ENCODE measurements at regions of chrX and their contacts with region 1.

Region 1: DNA sequence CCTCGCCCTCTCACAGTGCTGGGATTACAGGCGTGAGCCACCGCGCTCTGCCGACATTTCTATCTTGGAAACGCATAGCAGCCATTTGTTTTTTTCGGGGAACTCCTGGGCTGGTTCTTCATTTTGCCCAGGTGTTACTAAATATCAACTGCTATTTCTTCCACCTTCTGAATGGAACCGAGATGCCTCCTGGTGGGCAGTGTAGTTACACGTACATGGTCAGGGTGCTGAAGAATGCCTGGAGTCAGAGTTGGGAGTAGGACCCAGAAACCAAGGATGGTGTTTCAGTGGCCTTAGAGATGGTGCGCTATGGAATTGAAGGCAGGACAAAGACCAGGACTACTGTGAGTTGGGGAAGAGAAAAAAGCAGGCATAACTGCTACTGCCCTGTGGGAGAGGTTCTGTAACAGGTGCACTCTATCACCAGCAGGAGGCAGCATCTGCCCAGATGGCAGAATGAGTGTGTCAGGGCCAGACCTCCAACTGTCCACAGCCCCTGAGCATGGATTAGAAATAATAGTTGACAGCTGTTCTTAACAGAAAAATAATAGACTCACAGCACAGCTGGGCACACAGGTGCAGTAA is 81.7 kb downstream of the ZC4H2 start:
- DNase-seq: peak; percentile 36
- ATAC-seq: peak; percentile 99
- H3K4me3 ChIP-seq: no peak overlapping the region
- H3K27ac ChIP-seq: no peak overlapping the region
- H3K4me1 ChIP-seq: no peaks in the 10 kb centered on the region
- H3K27me3 ChIP-seq: no peaks in the 10 kb centered on the region
- CTCF ChIP-seq: peak; percentile 84
- EP300 ChIP-seq: no peak
- POLR2A ChIP-seq: no peak
- RAD21 ChIP-seq: peak; percentile 71

Region 2: DNA sequence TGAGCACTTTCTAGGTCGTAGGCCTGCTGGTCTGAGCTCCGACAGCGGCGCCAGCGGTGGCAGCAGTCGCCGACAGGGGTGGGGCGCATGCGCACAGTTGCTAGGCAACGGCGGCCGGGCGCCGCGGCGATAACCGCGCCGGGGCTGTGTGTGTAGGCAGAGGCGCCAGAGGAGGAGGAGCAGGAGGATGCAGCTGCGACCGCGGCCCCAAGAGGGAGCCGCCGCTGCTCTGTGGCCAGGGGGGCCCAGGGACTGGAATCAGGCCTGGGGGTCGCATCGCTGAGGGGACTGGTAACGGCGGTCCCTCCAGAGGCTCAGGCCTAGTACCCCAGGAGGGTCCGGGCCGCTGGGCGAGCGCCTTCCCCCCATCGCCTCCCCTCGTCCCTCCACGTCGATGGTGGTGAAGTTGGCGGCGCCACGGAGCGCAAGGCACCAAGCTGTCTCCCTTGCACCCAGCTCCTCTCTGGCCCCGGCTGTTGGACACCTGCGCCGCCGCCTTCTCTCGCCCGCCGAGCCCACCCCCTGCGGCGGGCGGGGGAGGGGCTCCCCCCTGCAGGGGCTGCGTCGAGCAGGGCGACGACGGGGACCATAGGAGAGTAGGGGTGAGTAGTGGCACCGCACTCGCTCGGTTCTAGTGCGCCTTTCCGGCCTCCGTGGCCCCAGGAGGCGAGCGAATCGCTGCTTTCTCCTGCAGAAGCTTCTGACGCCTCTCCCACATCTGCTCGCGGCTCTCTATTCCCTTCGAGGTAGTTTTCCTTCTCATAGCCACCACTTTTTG is 140.3 kb after region 1 on chrX:
- CTCF ChIA-PET with region 1: no interaction called
- POLR2A ChIA-PET with region 1: no interaction called
- in situ Hi-C with region 1: no loop called
- intact Hi-C with region 1: loop called (anchors 10 kb)
- DNase-seq: peak; percentile 56
- ATAC-seq: peak; percentile 97
- H3K4me3 ChIP-seq: peak within 1 kb of the TSS; percentile 62 to 78 (median 76)
- H3K27ac ChIP-seq: peak within 1 kb of the TSS; percentile 77
- H3K4me1 ChIP-seq: peaks cover 13% of the 10 kb centered on the region
- H3K27me3 ChIP-seq: no peaks in the 10 kb centered on the region; a peak in 1 of 5 replicates
- CTCF ChIP-seq: peak; percentile 79
- EP300 ChIP-seq: no peak
- POLR2A ChIP-seq: peak; percentile 45 to 60
- RAD21 ChIP-seq: peak; percentile 72

Region 3: DNA sequence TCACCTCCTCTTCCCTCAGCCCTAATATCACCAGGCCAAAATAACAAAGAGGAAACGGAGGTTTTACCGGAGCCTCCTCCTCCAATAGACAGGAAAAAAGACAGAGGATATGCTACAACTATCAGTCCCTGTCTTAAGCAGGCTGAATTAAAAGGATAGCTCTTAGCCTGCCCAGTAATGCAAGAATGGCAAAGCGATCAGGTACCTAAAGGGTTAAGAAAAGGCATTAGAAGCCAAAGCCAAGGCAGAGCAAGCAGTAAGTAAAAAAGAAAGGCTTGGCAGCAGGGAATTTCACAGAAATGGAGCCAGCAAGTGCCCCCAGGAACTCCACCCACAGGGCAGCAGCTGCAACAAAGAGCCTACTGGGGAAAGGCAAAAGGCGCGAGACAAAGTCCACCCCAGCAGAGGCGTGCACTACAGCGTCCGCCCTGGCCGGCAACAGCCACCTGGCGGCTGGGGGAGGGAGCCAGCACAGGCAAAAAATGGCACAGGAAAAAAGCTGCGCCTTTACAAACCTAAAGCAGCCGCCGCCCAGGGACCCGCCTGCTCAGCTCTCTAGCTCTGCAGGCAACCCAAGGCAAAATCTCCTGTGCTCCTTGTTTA is 302.3 kb after region 1 on chrX:
- CTCF ChIA-PET with region 1: no interaction called
- POLR2A ChIA-PET with region 1: no interaction called
- in situ Hi-C with region 1: no loop called
- intact Hi-C with region 1: loop called (anchors 1 kb)
- DNase-seq: peak; percentile 79
- ATAC-seq: peak; percentile 98
- H3K4me3 ChIP-seq: peak overlapping the region; percentile 43 to 68 (median 63)
- H3K27ac ChIP-seq: peak overlapping the region; percentile 86
- H3K4me1 ChIP-seq: peaks cover 18% of the 10 kb centered on the region
- H3K27me3 ChIP-seq: no peaks in the 10 kb centered on the region
- CTCF ChIP-seq: peak; percentile 76
- EP300 ChIP-seq: peak in 1 of 2 experiments; percentile 22; a peak in 1 of 4 replicates
- POLR2A ChIP-seq: peak in 1 of 2 experiments; percentile 29; a peak in 1 of 4 replicates
- RAD21 ChIP-seq: peak; percentile 81

Region 4: DNA sequence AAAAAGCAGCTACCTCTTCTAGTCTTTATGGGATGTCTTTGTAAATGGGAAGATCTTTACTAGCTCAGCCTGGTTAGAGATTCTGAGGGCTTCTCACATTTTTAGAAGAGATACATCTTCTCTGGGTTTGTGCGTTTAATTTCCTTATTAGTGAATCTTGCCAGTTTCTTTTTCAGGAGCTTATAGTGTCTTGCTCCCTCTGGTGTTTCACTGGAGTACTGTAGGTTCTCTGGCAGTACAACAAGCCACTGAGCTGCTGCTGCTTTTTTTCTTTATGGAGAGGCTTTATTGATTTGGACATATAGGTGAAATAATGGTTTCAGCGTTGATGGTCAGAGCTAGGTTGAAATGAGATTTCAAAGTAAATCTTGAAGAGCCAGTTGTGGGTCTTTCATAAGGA is 557.1 kb after region 1 on chrX:
- CTCF ChIA-PET with region 1: interaction called, 26 read pairs
- POLR2A ChIA-PET with region 1: no interaction called
- in situ Hi-C with region 1: loop called (anchors 25 kb)
- intact Hi-C with region 1: loop called (anchors 1 kb)
- DNase-seq: peak; percentile 15
- ATAC-seq: peak; percentile 47; the same call in 2 of the 3 replicates
- H3K4me3 ChIP-seq: no peak overlapping the region
- H3K27ac ChIP-seq: no peak overlapping the region
- H3K4me1 ChIP-seq: no peaks in the 10 kb centered on the region
- H3K27me3 ChIP-seq: no peaks in the 10 kb centered on the region
- CTCF ChIP-seq: peak; percentile 53
- EP300 ChIP-seq: no peak
- POLR2A ChIP-seq: no peak
- RAD21 ChIP-seq: no peak

Region 5: DNA sequence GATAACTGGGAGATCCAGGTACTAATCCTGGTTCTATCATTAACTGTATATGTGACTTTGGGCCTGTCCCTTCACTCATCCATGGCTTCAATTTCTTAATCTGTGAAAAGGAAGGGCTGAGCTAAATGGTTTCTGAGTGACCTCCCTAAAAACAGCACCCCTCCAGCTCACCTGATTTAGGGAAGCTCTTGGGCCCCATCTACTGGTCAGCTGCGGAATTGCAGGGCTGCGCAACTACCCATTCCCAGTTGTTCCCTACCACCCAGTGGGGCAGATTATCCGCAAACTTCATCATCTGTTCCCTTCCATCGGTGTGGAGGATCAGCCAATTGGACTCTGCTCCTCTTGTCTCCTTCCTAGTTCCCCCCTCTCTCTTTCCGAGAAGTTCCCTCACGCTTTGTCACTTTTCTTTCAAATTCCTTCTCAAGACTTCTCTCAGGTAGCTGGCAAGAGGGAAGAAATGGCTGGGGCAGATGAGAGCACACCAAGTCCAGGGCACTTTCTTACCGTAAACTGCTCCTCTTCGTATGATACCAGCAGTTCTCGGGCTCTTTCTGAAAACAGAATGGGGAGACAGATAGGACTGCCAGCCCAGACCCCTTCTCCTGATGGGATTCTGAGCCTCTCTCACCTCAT is 634.3 kb after region 1 on chrX:
- CTCF ChIA-PET with region 1: interaction called, 3 read pairs
- POLR2A ChIA-PET with region 1: no interaction called
- in situ Hi-C with region 1: no loop called
- intact Hi-C with region 1: loop called (anchors 5 kb)
- DNase-seq: no peak
- ATAC-seq: peak; percentile 81
- H3K4me3 ChIP-seq: no peak overlapping the region
- H3K27ac ChIP-seq: no peak overlapping the region
- H3K4me1 ChIP-seq: peaks cover 10% of the 10 kb centered on the region
- H3K27me3 ChIP-seq: no peaks in the 10 kb centered on the region; a peak in 1 of 5 replicates
- CTCF ChIP-seq: peak; percentile 76
- EP300 ChIP-seq: no peak
- POLR2A ChIP-seq: no peak
- RAD21 ChIP-seq: no peak

Measured in HepG2 (cell line).